Right ventricle myocardium inferior (tissue), 1 donor: ENCODE measurements at regions of chrX and their contacts with region 1.

Region 1: DNA sequence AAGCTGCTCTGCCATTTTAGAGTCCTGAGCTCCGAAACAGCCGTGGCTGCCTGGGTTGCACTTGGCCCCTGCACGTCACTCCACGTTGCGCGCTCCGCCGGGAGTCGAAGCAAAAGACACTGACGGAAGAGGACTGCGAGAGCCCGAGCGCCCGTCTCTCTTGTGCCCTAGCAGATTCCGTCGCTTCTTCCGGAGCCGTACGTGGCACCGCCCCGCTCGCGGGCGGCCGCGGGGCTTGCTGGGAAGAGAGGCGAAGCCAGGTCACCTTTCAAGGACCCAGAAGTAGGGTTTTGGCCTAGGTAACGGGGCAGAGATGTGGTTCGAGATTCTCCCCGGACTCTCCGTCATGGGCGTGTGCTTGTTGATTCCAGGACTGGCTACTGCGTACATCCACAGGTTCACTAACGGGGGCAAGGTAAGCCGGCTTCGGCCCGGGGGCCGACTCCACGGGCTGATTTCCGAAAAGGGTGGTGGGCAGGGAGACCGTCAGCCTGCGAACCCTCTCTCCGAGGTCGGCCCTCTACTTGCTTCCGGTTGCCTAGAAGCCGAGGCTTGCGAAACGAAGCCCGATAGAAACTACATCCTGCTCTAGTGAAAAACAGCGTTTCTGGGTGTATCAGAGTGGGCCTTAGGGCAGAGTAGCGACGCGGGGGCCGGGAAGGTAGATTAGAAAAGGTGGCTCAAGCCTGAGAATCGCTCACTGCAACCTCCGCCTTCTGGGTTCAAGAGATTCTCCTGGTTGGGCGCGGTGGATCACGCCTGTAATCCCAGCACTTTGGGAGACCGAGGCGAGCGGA is at the starts of genes NDUFA1 and RNF113A:
- DNase-seq: peak; percentile 93
- ATAC-seq: peak; percentile 99
- total RNA-seq, gene NDUFA1: 683 TPM
- total RNA-seq, gene RNF113A: 8.1 TPM

Region 2: GRCh38 chrX:119574394-119575266 is 297.2 kb before region 1 on chrX and contains the start of gene UBE2A:
- intact Hi-C with region 1: loop called (anchors 5 kb)
- DNase-seq: peak; percentile 97
- ATAC-seq: peak; percentile 98
- total RNA-seq, gene UBE2A: 66.3 TPM

Region 3: DNA sequence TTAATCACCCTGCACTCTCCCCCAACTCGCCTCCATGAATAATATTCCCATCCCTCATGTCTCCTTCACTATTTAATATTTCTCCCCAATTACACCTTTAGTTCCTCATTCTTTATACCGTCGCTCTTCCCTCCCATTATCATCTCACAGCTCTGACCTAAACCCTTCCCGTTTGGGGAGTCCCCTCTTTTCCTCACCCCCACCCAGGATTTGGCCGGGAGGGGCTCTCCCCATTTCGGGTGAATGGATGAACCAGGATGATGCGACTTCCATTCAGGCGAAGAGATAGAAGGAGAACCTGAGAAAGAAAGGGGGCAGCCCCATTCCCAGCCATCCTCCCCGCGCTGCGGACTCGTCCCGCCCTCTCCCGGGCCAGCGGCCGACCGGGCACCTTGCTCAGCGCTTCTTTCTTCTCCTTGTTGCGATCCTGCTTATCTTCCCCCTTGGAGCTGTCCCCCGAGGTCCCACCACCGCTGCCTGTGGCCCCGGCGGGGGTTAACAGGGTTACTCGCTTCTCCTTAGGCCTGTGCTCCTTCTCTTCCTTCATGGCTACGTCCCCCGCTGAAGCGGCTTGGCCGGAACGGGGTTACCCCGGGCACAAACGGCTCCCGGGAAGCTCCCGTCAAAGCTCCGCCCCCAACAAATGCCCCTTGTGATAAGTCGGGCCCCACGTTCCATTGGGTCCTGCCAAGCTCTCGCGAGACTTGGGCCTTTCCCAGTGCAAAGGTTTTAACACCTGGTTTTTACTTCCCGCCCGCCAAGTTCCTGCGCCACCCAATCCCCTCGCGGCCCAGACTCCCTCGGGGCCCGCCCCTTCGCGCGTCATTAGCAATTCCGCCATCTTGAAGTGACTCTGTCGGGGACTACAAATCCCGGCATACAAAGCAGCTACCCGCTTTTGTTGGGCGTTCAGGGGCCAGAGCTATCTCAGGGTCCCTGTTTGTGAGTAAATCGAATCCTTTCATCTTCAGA is 19.1 kb before region 1 on chrX and contains the start of gene UPF3B:
- intact Hi-C with region 1: loop called (anchors 1 kb)
- DNase-seq: peak; percentile 96
- ATAC-seq: peak; percentile 98
- total RNA-seq, gene UPF3B: 3.4 TPM

Region 4: GRCh38 chrX:119916310-119916709 is 44.5 kb after region 1 on chrX:
- intact Hi-C with region 1: no loop called
- DNase-seq: no peak
- ATAC-seq: no peak